MCF 10A (cell line): ENCODE measurements at regions of chr19 and their contacts with region 1.

Region 1: DNA sequence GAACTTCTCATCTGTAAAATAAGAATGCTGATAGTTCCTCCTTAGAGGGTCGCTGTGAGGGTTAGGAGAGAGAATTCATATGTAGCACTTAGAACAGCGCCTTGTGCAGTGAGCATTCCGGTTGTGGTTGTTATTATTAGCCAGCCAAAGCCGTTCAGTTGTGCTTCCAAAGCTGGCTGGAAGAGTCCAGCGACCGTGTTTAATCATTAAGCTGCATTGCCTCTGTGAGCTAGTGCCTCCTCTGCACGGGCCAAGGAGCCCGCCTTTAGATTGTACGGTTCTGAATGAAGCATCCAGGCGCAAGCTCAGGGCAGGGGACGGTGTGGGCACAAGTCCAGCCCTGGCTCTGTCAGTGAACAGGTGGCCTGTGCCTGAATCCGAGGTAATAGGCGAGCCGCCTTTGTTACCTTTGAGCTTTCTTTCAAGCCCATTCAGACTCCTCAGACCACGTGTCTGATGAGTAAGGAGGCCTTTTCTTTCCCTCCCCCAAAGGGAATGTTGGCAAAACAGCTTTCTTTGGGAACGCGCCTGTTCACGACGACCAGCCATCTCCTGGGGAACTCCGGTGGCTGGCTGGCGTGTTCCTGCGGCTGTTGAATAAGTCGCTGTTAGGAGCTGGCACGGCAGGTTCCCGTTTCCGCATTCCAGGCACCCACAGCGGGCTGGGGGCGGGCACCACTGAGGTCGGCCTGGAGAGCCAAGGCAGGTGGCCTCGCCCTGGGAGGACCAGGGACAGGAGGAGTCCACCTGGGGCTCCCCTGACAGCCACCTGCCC is 25.1 kb downstream of the SIPA1L3 start:
- DNase-seq: peak; percentile 96
- H3K4me3 Mint-ChIP-seq: peak overlapping the region; percentile 75
- H3K27ac Mint-ChIP-seq: peak overlapping the region; percentile 94
- H3K4me1 Mint-ChIP-seq: peaks cover 30% of the 10 kb centered on the region
- H3K27me3 Mint-ChIP-seq: no peaks in the 10 kb centered on the region
- CTCF ChIP-seq: no peak

Region 2: GRCh38 chr19:37885392-37885791 is 46.7 kb before region 1 on chr19:
- CTCF ChIA-PET with region 1: no interaction called
- POLR2A ChIA-PET with region 1: no interaction called
- intact Hi-C with region 1: no loop called
- DNase-seq: no peak
- H3K4me3 Mint-ChIP-seq: no peak overlapping the region
- H3K27ac Mint-ChIP-seq: no peak overlapping the region
- H3K4me1 Mint-ChIP-seq: no peaks in the 10 kb centered on the region
- H3K27me3 Mint-ChIP-seq: no peaks in the 10 kb centered on the region
- CTCF ChIP-seq: no peak

Region 3: GRCh38 chr19:37979547-37980082 is 47.5 kb after region 1 on chr19:
- CTCF ChIA-PET with region 1: no interaction called
- POLR2A ChIA-PET with region 1: interaction called, 11 read pairs
- intact Hi-C with region 1: no loop called
- DNase-seq: peak; percentile 90
- H3K4me3 Mint-ChIP-seq: peak overlapping the region; percentile 67
- H3K27ac Mint-ChIP-seq: peak overlapping the region; percentile 97
- H3K4me1 Mint-ChIP-seq: peaks cover 20% of the 10 kb centered on the region
- H3K27me3 Mint-ChIP-seq: no peaks in the 10 kb centered on the region
- CTCF ChIP-seq: no peak

Region 4: GRCh38 chr19:37991841-37992248 is 59.8 kb after region 1 on chr19:
- CTCF ChIA-PET with region 1: interaction called, 12 read pairs
- POLR2A ChIA-PET with region 1: interaction called, 7 read pairs
- intact Hi-C with region 1: loop called (anchors 10 kb)
- DNase-seq: no peak
- H3K4me3 Mint-ChIP-seq: no peak overlapping the region
- H3K27ac Mint-ChIP-seq: no peak overlapping the region
- H3K4me1 Mint-ChIP-seq: peaks cover 19% of the 10 kb centered on the region
- H3K27me3 Mint-ChIP-seq: no peaks in the 10 kb centered on the region
- CTCF ChIP-seq: no peak

Region 5: DNA sequence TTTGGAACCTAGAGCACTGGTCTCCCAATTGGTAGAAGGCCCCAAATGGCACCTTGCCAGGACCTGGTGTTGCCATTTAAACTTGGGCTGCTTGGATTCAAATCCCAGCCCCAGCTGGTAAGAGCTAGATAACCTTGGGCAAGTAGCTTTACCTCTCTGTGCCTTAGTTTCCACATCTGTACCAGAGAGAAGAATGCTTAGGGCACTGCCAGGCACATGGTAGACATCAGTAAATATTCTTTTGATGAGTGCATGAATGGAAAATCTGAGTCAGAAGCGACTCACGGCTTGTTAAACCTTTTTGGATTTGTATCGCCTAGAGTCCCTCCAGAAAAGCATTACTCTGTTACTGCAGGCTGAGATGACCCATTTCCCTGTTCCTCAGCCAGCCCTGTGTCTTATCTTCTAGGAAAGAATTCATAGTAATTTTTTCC is 65.9 kb after region 1 on chr19:
- CTCF ChIA-PET with region 1: interaction called, 4 read pairs
- POLR2A ChIA-PET with region 1: interaction called, 25 read pairs
- intact Hi-C with region 1: loop called (anchors 10 kb)
- DNase-seq: peak; percentile 77
- H3K4me3 Mint-ChIP-seq: no peak overlapping the region
- H3K27ac Mint-ChIP-seq: peak overlapping the region; percentile 61
- H3K4me1 Mint-ChIP-seq: no peaks in the 10 kb centered on the region
- H3K27me3 Mint-ChIP-seq: no peaks in the 10 kb centered on the region
- CTCF ChIP-seq: no peak

Region 6: GRCh38 chr19:38004521-38005223 is 72.6 kb after region 1 on chr19:
- CTCF ChIA-PET with region 1: interaction called, 6 read pairs
- POLR2A ChIA-PET with region 1: interaction called, 25 read pairs
- intact Hi-C with region 1: loop called (anchors 10 kb)
- DNase-seq: peak; percentile 99
- H3K4me3 Mint-ChIP-seq: no peak overlapping the region
- H3K27ac Mint-ChIP-seq: no peak overlapping the region
- H3K4me1 Mint-ChIP-seq: peaks cover 5% of the 10 kb centered on the region
- H3K27me3 Mint-ChIP-seq: no peaks in the 10 kb centered on the region
- CTCF ChIP-seq: no peak